CD4-positive, alpha-beta memory T cell (primary cell): ENCODE measurements at regions of chr2 and their contacts with region 1.

Region 1: DNA sequence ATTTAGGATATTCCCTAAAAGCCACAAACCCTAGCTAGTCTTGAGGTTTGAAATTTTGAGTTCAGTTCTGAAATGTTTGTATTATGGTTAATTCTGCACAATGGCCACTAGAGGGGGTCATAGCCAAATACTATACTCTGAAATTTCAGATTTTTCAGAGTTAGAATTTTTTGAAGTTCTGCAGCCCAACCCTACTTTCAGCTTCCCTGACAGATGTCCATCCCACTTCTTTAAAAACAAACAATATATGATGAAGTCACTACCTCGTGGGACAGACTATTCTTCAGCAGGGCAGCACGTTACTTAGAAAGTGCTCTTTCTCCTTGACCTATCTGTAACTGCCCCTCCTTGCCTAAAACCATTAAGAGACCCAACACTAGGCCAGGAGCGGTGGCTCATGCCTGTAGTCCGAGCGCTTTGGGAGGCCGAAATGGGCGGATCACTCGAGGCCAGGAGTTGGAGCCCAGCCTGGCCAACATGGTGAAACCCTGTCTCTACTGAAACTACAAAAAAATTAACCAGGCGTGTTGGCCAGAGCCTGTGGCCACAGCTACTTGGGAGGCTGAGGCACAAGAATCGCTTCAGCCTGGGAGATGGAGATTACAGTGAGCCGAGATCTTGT is 48.2 kb upstream of the PAPOLG start:
- DNase-seq: peak in 4 of 5 donors; percentile 31 to 39 (median 32)
- H3K4me3 ChIP-seq: no peak overlapping the region
- H3K4me3 Mint-ChIP-seq: no peak overlapping the region
- H3K27ac ChIP-seq: no peak overlapping the region
- H3K27ac Mint-ChIP-seq: no peak overlapping the region
- H3K4me1 ChIP-seq: no peaks in the 10 kb centered on the region
- H3K4me1 Mint-ChIP-seq: no peaks in the 10 kb centered on the region
- H3K27me3 ChIP-seq: no peaks in the 10 kb centered on the region
- H3K27me3 Mint-ChIP-seq: peaks cover 6 to 12% of the 10 kb centered on the region in 2 donors

Region 2: GRCh38 chr2:60695793-60696192 is 12.1 kb before region 1 on chr2:
- CTCF ChIA-PET with region 1: interaction called, 38 read pairs
- POLR2A ChIA-PET with region 1: no interaction called
- intact Hi-C with region 1: no loop called
- DNase-seq: no peak
- H3K4me3 ChIP-seq: no peak overlapping the region
- H3K4me3 Mint-ChIP-seq: no peak overlapping the region
- H3K27ac ChIP-seq: no peak overlapping the region
- H3K27ac Mint-ChIP-seq: no peak overlapping the region
- H3K4me1 ChIP-seq: no peaks in the 10 kb centered on the region
- H3K4me1 Mint-ChIP-seq: no peaks in the 10 kb centered on the region
- H3K27me3 ChIP-seq: no peaks in the 10 kb centered on the region
- H3K27me3 Mint-ChIP-seq: peaks cover 3 to 6% of the 10 kb centered on the region in 2 donors

Region 3: GRCh38 chr2:60756191-60757041 is 48.6 kb after region 1 on chr2 and contains the start of gene PAPOLG:
- CTCF ChIA-PET with region 1: interaction called, 5 read pairs
- POLR2A ChIA-PET with region 1: interaction called, 7 read pairs
- intact Hi-C with region 1: loop called (anchors 1 kb)
- DNase-seq: peak; percentile 92 to 96 (median 93)
- H3K4me3 ChIP-seq: peak within 1 kb of the TSS; percentile 76 to 92
- H3K4me3 Mint-ChIP-seq: peak within 1 kb of the TSS; percentile 98 to 100 (median 100)
- H3K27ac ChIP-seq: peak within 1 kb of the TSS; percentile 89
- H3K27ac Mint-ChIP-seq: peak within 1 kb of the TSS; percentile 84 to 100 (median 99)
- H3K4me1 ChIP-seq: peaks cover 36% of the 10 kb centered on the region
- H3K4me1 Mint-ChIP-seq: peaks cover 28 to 51% (median 40%) of the 10 kb centered on the region in 4 donors
- H3K27me3 ChIP-seq: no peaks in the 10 kb centered on the region
- H3K27me3 Mint-ChIP-seq: no peaks in the 10 kb centered on the region
- total RNA-seq, gene PAPOLG: 40.1 to 40.3 TPM

Region 4: GRCh38 chr2:60826111-60826510 is 118.2 kb after region 1 on chr2:
- CTCF ChIA-PET with region 1: no interaction called
- POLR2A ChIA-PET with region 1: no interaction called
- intact Hi-C with region 1: no loop called
- DNase-seq: no peak
- H3K4me3 ChIP-seq: no peak overlapping the region
- H3K4me3 Mint-ChIP-seq: no peak overlapping the region
- H3K27ac ChIP-seq: no peak overlapping the region
- H3K27ac Mint-ChIP-seq: peak overlapping the region in 5 of 7 donors; percentile 1 to 68 (median 8)
- H3K4me1 ChIP-seq: no peaks in the 10 kb centered on the region
- H3K4me1 Mint-ChIP-seq: peaks cover 2 to 9% (median 5%) of the 10 kb centered on the region in 4 donors
- H3K27me3 ChIP-seq: no peaks in the 10 kb centered on the region
- H3K27me3 Mint-ChIP-seq: peaks cover 3 to 6% of the 10 kb centered on the region in 2 donors